Calu3 (cell line): ENCODE measurements at regions of chr12 and their contacts with region 1.

Region 1: GRCh38 chr12:119938049-119938667 is 50.9 kb upstream of the BICDL1 start:
- DNase-seq: peak; percentile 70
- H3K4me3 Mint-ChIP-seq: no peak overlapping the region
- H3K27ac Mint-ChIP-seq: no peak overlapping the region
- H3K4me1 Mint-ChIP-seq: no peaks in the 10 kb centered on the region
- H3K27me3 Mint-ChIP-seq: no peaks in the 10 kb centered on the region
- CTCF ChIP-seq: peak; percentile 50

Region 2: DNA sequence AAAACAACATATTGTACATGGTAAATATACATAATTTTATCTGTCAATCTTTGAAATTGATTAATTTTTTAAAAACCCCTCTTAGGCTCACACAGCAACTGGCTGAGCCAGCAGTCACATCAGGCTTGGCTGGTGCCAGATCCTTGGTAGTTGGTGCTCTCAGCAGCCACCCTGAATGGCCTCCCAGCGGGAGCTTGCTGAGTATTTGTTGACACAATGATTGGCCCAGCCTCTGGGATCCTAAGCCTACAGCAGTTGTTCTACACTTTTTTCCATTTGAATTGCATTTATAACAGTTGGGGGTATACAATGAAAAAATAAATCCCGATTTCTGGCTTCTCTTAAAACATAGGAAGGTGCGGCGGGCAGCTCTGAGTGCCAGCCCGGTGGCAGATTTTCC is 259.1 kb before region 1 on chr12:
- CTCF ChIA-PET with region 1: no interaction called
- intact Hi-C with region 1: no loop called
- DNase-seq: no peak
- H3K4me3 Mint-ChIP-seq: no peak overlapping the region
- H3K27ac Mint-ChIP-seq: peak overlapping the region; percentile 38
- H3K4me1 Mint-ChIP-seq: peaks cover 42% of the 10 kb centered on the region
- H3K27me3 Mint-ChIP-seq: no peaks in the 10 kb centered on the region
- CTCF ChIP-seq: no peak

Region 3: GRCh38 chr12:119876761-119877638 is 61.2 kb before region 1 on chr12 and contains the start of gene CIT:
- CTCF ChIA-PET with region 1: interaction called, 3 read pairs
- intact Hi-C with region 1: loop called (anchors 2 kb)
- DNase-seq: peak; percentile 94
- H3K4me3 Mint-ChIP-seq: peak within 1 kb of the TSS; percentile 87
- H3K27ac Mint-ChIP-seq: peak within 1 kb of the TSS; percentile 14
- H3K4me1 Mint-ChIP-seq: no peaks in the 10 kb centered on the region
- H3K27me3 Mint-ChIP-seq: peaks cover 17% of the 10 kb centered on the region
- CTCF ChIP-seq: no peak
- total RNA-seq, gene CIT: 72.4 and 82.3 TPM in 2 replicates

Region 4: GRCh38 chr12:119902084-119902509 is 36.1 kb before region 1 on chr12:
- CTCF ChIA-PET with region 1: no interaction called
- intact Hi-C with region 1: loop called (anchors 2 kb)
- DNase-seq: peak; percentile 81
- H3K4me3 Mint-ChIP-seq: no peak overlapping the region
- H3K27ac Mint-ChIP-seq: no peak overlapping the region
- H3K4me1 Mint-ChIP-seq: peaks cover 8% of the 10 kb centered on the region
- H3K27me3 Mint-ChIP-seq: peaks cover 19% of the 10 kb centered on the region
- CTCF ChIP-seq: peak; percentile 77

Region 5: GRCh38 chr12:120086801-120087621 is 148.9 kb after region 1 on chr12:
- CTCF ChIA-PET with region 1: interaction called, 4 read pairs
- intact Hi-C with region 1: loop called (anchors 10 kb)
- DNase-seq: peak; percentile 99
- H3K4me3 Mint-ChIP-seq: peak overlapping the region; percentile 71
- H3K27ac Mint-ChIP-seq: peak overlapping the region; percentile 82
- H3K4me1 Mint-ChIP-seq: peaks cover 15% of the 10 kb centered on the region
- H3K27me3 Mint-ChIP-seq: no peaks in the 10 kb centered on the region
- CTCF ChIP-seq: peak; percentile 95